ENCODE measurements at regions of chr1 and their contacts with region 1.

Region 1: GRCh38 chr1:43073490-43074230 is 98.4 kb downstream of the EBNA1BP2 start:
- DNase-seq: peak; percentile 35 to 86 (median 74)
- ATAC-seq: peak; percentile 89
- H3K4me3 ChIP-seq: no peak overlapping the region
- H3K4me3 Mint-ChIP-seq: no peak overlapping the region
- H3K27ac ChIP-seq: no peak overlapping the region
- H3K27ac Mint-ChIP-seq: no peak overlapping the region
- H3K4me1 ChIP-seq: peaks cover 3% of the 10 kb centered on the region
- H3K4me1 Mint-ChIP-seq: peaks cover 8% of the 10 kb centered on the region
- H3K27me3 ChIP-seq: no peaks in the 10 kb centered on the region
- H3K27me3 Mint-ChIP-seq: no peaks in the 10 kb centered on the region
- CTCF ChIP-seq: peak; percentile 85

Region 2: GRCh38 chr1:42904434-42904833 is 169.2 kb before region 1 on chr1:
- CTCF ChIA-PET with region 1: interaction called, 15 read pairs
- POLR2A ChIA-PET with region 1: no interaction called
- intact Hi-C with region 1: no loop called
- DNase-seq: no peak
- ATAC-seq: no peak
- H3K4me3 ChIP-seq: no peak overlapping the region
- H3K4me3 Mint-ChIP-seq: no peak overlapping the region
- H3K27ac ChIP-seq: no peak overlapping the region
- H3K27ac Mint-ChIP-seq: no peak overlapping the region
- H3K4me1 ChIP-seq: no peaks in the 10 kb centered on the region
- H3K4me1 Mint-ChIP-seq: no peaks in the 10 kb centered on the region
- H3K27me3 ChIP-seq: no peaks in the 10 kb centered on the region
- H3K27me3 Mint-ChIP-seq: peaks cover 7% of the 10 kb centered on the region
- CTCF ChIP-seq: no peak

Region 3: GRCh38 chr1:42936309-42937078 is 137.2 kb before region 1 on chr1:
- CTCF ChIA-PET with region 1: interaction called, 19 read pairs
- POLR2A ChIA-PET with region 1: interaction called, 5 read pairs
- intact Hi-C with region 1: loop called (anchors 1 kb)
- DNase-seq: peak in 5 of 9 experiments; percentile 47 to 83 (median 67)
- ATAC-seq: peak; percentile 35
- H3K4me3 ChIP-seq: no peak overlapping the region
- H3K4me3 Mint-ChIP-seq: peak overlapping the region; percentile 42
- H3K27ac ChIP-seq: peak overlapping the region; percentile 19 to 90
- H3K27ac Mint-ChIP-seq: peak overlapping the region; percentile 95
- H3K4me1 ChIP-seq: peaks cover 79% of the 10 kb centered on the region
- H3K4me1 Mint-ChIP-seq: peaks cover 97% of the 10 kb centered on the region
- H3K27me3 ChIP-seq: no peaks in the 10 kb centered on the region
- H3K27me3 Mint-ChIP-seq: no peaks in the 10 kb centered on the region
- CTCF ChIP-seq: no peak

Region 4: DNA sequence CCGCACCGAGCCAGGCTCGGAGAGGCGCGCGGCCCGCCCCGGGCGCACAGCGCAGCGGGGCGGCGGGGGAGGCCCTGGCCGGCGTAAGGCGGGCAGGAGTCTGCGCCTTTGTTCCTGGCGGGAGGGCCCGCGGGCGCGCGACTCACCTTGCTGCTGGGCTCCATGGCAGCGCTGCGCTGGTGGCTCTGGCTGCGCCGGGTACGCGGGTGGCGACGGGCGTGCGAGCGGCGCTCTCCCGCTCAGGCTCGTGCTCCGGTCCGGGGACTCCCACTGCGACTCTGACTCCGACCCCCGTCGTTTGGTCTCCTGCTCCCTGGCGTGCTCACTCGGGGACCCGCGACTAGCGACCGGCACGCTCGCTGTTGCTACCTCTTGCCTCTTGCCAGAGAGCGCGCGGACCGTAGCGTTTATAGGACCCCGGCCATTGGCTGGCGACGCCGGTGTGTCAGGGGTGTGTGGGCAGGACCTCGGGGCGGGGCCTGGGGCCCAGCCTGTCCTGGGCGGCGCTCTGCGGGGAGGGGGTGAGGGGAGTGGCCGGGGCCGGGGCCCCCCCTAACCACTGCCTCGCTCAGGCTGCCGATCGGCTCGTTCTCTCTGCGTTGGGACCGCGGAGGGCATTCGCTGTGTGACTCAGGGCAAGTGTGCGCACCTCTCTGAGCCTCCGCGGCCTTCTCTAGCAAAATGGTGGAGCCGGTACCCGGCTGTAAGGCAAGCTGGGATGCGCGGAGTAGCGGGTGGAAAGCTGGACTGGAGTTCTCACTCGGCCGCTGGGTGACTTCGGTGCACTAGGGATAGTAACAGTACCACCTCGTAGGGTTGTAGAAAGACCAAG is 115.0 kb before region 1 on chr1 and contains the start of gene SLC2A1:
- CTCF ChIA-PET with region 1: interaction called, 16 read pairs
- POLR2A ChIA-PET with region 1: interaction called, 3 read pairs
- intact Hi-C with region 1: no loop called
- DNase-seq: peak; percentile 92 to 98 (median 96)
- ATAC-seq: peak; percentile 90
- H3K4me3 ChIP-seq: peak within 1 kb of the TSS; percentile 79 to 96
- H3K4me3 Mint-ChIP-seq: peak within 1 kb of the TSS; percentile 98
- H3K27ac ChIP-seq: peak within 1 kb of the TSS; percentile 76 to 86
- H3K27ac Mint-ChIP-seq: peak within 1 kb of the TSS; percentile 99
- H3K4me1 ChIP-seq: peaks cover 42% of the 10 kb centered on the region
- H3K4me1 Mint-ChIP-seq: peaks cover 51% of the 10 kb centered on the region
- H3K27me3 ChIP-seq: no peaks in the 10 kb centered on the region
- H3K27me3 Mint-ChIP-seq: no peaks in the 10 kb centered on the region
- CTCF ChIP-seq: no peak
- total RNA-seq, gene SLC2A1: 85.0 to 97.2 TPM

Region 5: GRCh38 chr1:43058545-43059355 is 14.9 kb before region 1 on chr1:
- CTCF ChIA-PET with region 1: interaction called, 32 read pairs
- POLR2A ChIA-PET with region 1: no interaction called
- intact Hi-C with region 1: no loop called
- DNase-seq: no peak
- ATAC-seq: no peak
- H3K4me3 ChIP-seq: no peak overlapping the region
- H3K4me3 Mint-ChIP-seq: no peak overlapping the region
- H3K27ac ChIP-seq: no peak overlapping the region
- H3K27ac Mint-ChIP-seq: no peak overlapping the region
- H3K4me1 ChIP-seq: no peaks in the 10 kb centered on the region
- H3K4me1 Mint-ChIP-seq: peaks cover 9% of the 10 kb centered on the region
- H3K27me3 ChIP-seq: no peaks in the 10 kb centered on the region
- H3K27me3 Mint-ChIP-seq: peaks cover 10% of the 10 kb centered on the region
- CTCF ChIP-seq: no peak

Region 6: GRCh38 chr1:43251024-43251423 is 177.4 kb after region 1 on chr1:
- CTCF ChIA-PET with region 1: no interaction called
- POLR2A ChIA-PET with region 1: no interaction called
- intact Hi-C with region 1: no loop called
- DNase-seq: peak in 1 of 9 experiments; percentile 5
- ATAC-seq: no peak
- H3K4me3 ChIP-seq: no peak overlapping the region
- H3K4me3 Mint-ChIP-seq: no peak overlapping the region
- H3K27ac ChIP-seq: no peak overlapping the region
- H3K27ac Mint-ChIP-seq: no peak overlapping the region
- H3K4me1 ChIP-seq: no peaks in the 10 kb centered on the region
- H3K4me1 Mint-ChIP-seq: no peaks in the 10 kb centered on the region
- H3K27me3 ChIP-seq: no peaks in the 10 kb centered on the region
- H3K27me3 Mint-ChIP-seq: peaks cover 9% of the 10 kb centered on the region
- CTCF ChIP-seq: no peak

Region 7: DNA sequence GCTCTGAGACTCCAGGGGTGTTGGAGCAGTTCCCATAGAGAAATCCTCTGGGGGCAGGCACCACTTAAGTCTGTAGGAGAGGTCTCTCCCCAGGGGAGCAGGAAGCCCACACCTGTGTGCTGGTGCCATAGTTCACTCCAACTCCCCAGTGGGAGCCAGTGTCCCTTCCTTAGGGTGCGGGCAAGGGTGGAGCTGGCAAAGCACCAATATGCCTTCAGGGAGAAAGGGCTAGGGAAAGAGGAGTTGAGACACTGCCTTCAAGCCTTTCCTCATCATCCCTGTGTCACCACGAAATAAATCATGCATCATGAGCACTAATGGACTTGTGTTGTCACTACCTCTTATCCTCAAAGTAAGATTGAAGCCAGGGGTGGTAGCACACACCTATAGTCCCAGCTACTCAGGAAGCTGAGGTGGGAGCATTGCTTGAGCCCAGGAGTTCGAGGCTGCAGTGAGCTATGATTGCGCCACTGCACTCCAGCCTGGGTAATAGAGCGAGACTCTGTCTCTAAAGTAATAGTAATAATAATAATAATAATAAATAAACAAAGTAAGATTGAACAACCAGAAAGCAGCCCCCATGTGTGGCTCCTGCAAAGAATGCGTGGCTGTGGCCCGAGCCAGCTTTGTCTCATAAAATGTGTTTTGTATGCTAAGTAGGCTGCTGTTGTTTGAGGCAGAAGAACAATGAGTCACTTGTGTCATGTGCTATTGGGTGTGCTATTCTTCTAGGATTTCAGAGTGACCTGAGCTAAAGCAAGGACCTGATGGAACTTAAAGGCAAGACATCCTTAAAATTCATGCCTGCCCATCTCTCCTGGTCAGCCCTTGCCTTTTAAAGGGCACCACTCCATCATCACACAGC is 220.5 kb after region 1 on chr1:
- CTCF ChIA-PET with region 1: no interaction called
- POLR2A ChIA-PET with region 1: no interaction called
- intact Hi-C with region 1: no loop called
- DNase-seq: no peak
- ATAC-seq: no peak
- H3K4me3 ChIP-seq: no peak overlapping the region
- H3K4me3 Mint-ChIP-seq: no peak overlapping the region
- H3K27ac ChIP-seq: no peak overlapping the region
- H3K27ac Mint-ChIP-seq: no peak overlapping the region
- H3K4me1 ChIP-seq: peaks cover 9% of the 10 kb centered on the region
- H3K4me1 Mint-ChIP-seq: peaks cover 13% of the 10 kb centered on the region
- H3K27me3 ChIP-seq: no peaks in the 10 kb centered on the region
- H3K27me3 Mint-ChIP-seq: no peaks in the 10 kb centered on the region
- CTCF ChIP-seq: no peak

Measured in CD8-positive, alpha-beta T cell (primary cell).